ENCODE measurements at regions of chr12 and their contacts with region 1.

Region 1: GRCh38 chr12:14629832-14630710 is 62.4 kb upstream of the PLBD1 start:
- DNase-seq: peak; percentile 75
- ATAC-seq: peak; percentile 97
- H3K4me3 Mint-ChIP-seq: no peak overlapping the region
- H3K27ac Mint-ChIP-seq: no peak overlapping the region
- H3K4me1 Mint-ChIP-seq: no peaks in the 10 kb centered on the region
- H3K27me3 Mint-ChIP-seq: peaks cover 4% of the 10 kb centered on the region

Region 2: DNA sequence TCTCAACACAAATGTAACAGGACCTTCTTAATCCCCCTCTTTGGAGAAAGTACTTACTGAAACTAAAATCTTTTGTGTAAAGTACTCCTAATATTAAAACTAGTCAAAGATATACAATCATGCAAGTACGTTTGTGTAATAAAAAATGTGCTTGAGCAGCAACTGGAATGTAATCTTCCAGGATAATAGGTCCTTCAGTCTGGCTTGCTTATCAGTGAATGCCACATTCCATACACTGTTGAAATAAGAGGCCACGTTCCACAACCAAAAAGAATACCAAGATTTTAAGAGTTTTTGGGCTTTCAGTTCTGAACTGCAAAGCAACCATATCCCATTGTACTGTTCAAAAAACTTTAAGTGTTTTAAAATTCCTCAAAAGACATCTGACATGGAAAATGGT is 622.4 kb before region 1 on chr12:
- CTCF ChIA-PET with region 1: no interaction called
- POLR2A ChIA-PET with region 1: no interaction called
- intact Hi-C with region 1: no loop called
- DNase-seq: no peak
- ATAC-seq: no peak
- H3K4me3 Mint-ChIP-seq: no peak overlapping the region
- H3K27ac Mint-ChIP-seq: no peak overlapping the region
- H3K4me1 Mint-ChIP-seq: no peaks in the 10 kb centered on the region
- H3K27me3 Mint-ChIP-seq: no peaks in the 10 kb centered on the region

Region 3: GRCh38 chr12:14612898-14613445 is 17.1 kb before region 1 on chr12:
- CTCF ChIA-PET with region 1: interaction called, 14 read pairs
- POLR2A ChIA-PET with region 1: no interaction called
- intact Hi-C with region 1: no loop called
- DNase-seq: no peak
- ATAC-seq: no peak
- H3K4me3 Mint-ChIP-seq: no peak overlapping the region
- H3K27ac Mint-ChIP-seq: no peak overlapping the region
- H3K4me1 Mint-ChIP-seq: no peaks in the 10 kb centered on the region
- H3K27me3 Mint-ChIP-seq: peaks cover 5% of the 10 kb centered on the region

Region 4: DNA sequence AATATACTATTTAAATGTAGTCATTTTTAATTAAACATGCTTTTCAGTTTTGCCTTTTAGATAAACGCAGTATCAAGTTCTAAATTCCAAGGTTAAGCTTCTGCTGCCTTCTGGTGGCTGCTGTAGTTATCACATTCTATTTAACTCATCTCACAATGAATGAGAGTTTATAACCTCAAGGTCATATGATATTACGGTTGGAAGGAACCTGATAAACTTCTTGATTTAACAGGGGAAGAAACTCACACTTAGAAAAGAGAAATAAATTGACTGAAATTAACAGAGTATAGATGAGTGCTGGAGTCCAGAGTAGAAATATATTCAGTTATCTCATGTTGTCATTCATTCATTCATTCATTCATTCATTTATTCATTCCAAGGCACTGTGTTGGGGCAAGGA is 34.4 kb after region 1 on chr12:
- CTCF ChIA-PET with region 1: interaction called, 8 read pairs
- POLR2A ChIA-PET with region 1: no interaction called
- intact Hi-C with region 1: loop called (anchors 1 kb)
- DNase-seq: peak; percentile 44
- ATAC-seq: no peak
- H3K4me3 Mint-ChIP-seq: no peak overlapping the region
- H3K27ac Mint-ChIP-seq: no peak overlapping the region
- H3K4me1 Mint-ChIP-seq: peaks cover 3% of the 10 kb centered on the region
- H3K27me3 Mint-ChIP-seq: peaks cover 5% of the 10 kb centered on the region

Region 5: GRCh38 chr12:14716848-14717444 is 86.9 kb after region 1 on chr12:
- CTCF ChIA-PET with region 1: interaction called, 8 read pairs
- POLR2A ChIA-PET with region 1: no interaction called
- intact Hi-C with region 1: loop called (anchors 1 kb)
- DNase-seq: peak; percentile 61
- ATAC-seq: peak; percentile 69
- H3K4me3 Mint-ChIP-seq: no peak overlapping the region
- H3K27ac Mint-ChIP-seq: no peak overlapping the region
- H3K4me1 Mint-ChIP-seq: no peaks in the 10 kb centered on the region
- H3K27me3 Mint-ChIP-seq: peaks cover 5% of the 10 kb centered on the region

Measured in activated CD4-positive, alpha-beta T cell treated with anti-CD3 and anti-CD28 coated beads for 36 hours (primary cell).